K562 (cell line): ENCODE measurements at regions of chr1 and their contacts with region 1.

Region 1: GRCh38 chr1:12314333-12314903 is 84.6 kb downstream of the VPS13D start:
- DNase-seq: peak in 2 of 4 experiments; percentile 25 to 29
- ATAC-seq: peak; percentile 70
- H3K4me3 ChIP-seq: no peak overlapping the region
- H3K27ac ChIP-seq: no peak overlapping the region
- H3K4me1 ChIP-seq: 0 out of 5 replicates have a peak, but pooled peaks cover 0 to 2% of the 10 kb centered on the region in 2 experiments
- H3K27me3 ChIP-seq: no peaks in the 10 kb centered on the region
- CTCF ChIP-seq: peak; percentile 36 to 61 (median 54); a peak in 5 of 6 replicates
- EP300 ChIP-seq: no peak
- POLR2A ChIP-seq: no peak
- RAD21 ChIP-seq: peak; percentile 64 to 76

Region 2: DNA sequence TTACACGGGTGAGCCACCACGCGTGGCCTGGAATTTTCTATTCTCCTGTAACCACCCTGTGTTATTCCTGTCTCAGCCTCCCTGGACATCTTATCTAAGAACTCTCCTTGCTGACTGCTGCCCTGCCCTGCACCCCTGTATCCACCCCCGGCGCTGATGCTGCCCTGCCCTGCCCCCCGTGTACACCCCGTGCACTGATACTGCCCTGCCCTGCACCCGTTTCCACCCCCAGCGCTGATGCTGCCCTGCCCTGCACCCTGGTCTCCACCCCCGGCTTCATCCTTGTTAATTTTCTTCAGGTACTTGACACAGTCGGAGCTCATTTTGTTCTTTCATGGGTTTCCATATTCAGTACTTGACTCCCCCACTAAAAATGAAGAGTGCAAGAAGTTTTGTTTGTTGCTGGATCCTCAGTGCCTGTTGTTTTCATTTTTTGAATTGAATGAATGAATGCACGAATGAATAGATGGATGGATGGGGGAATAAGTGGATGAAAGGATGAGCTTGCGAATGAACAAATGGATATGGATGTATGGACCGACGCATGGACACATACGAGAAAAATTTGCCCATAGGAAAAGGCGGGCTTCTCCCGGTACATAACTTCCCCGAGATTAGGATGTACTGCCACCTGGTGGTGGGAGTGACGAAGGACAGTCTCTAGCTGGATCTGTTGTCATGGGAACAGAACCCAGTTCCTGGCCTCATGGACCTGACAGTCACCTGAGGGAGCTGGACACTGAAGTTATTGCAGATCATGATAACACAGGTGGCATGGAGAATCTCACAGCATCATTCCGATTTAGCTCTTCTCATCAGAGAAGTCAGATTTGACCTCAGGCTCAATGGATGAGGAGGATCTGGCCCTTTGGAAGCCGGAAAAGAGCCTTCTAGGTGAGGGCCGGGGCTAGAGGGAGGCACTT is 344.4 kb after region 1 on chr1:
- CTCF ChIA-PET with region 1: interaction called, 38 read pairs
- POLR2A ChIA-PET with region 1: interaction called, 3 read pairs
- in situ Hi-C with region 1: no loop called
- intact Hi-C with region 1: loop called (anchors 1 kb)
- DNase-seq: peak; percentile 94 to 98 (median 96)
- ATAC-seq: peak; percentile 74
- H3K4me3 ChIP-seq: no peak overlapping the region
- H3K27ac ChIP-seq: no peak overlapping the region
- H3K4me1 ChIP-seq: peaks cover 10 to 18% of the 10 kb centered on the region in 2 experiments
- H3K27me3 ChIP-seq: no peaks in the 10 kb centered on the region
- CTCF ChIP-seq: peak; percentile 90 to 98 (median 98)
- EP300 ChIP-seq: no peak
- POLR2A ChIP-seq: no peak
- RAD21 ChIP-seq: peak; percentile 90 to 97

Region 3: DNA sequence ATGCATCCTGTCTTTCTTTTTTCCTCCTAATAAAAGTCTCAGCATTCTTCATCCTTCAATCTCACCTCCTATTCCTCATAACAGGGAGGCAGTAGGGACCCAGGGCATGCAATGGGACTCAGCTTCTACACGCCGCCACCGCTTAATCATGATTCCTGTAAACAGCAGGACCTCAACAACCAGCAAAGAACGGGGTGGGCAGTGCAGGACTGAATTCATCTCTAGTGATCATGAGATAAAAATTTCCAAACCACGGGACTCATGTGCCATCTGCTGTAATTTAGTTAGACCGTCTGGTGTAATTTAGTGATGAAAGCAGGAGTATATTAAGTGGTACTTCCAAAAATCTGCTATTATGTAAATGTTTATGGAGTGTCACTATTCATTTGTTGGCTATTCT is 464.5 kb after region 1 on chr1:
- CTCF ChIA-PET with region 1: interaction called, 3 read pairs
- POLR2A ChIA-PET with region 1: no interaction called
- in situ Hi-C with region 1: loop called (anchors 10 kb)
- intact Hi-C with region 1: loop called (anchors 10 kb)
- DNase-seq: no peak
- ATAC-seq: no peak
- H3K4me3 ChIP-seq: no peak overlapping the region
- H3K27ac ChIP-seq: no peak overlapping the region
- H3K4me1 ChIP-seq: no peaks in the 10 kb centered on the region
- H3K27me3 ChIP-seq: peaks cover 15 to 42% of the 10 kb centered on the region in 2 experiments; a peak in 4 of 5 replicates
- CTCF ChIP-seq: peak in 1 of 3 experiments; percentile 12; a peak in 1 of 6 replicates
- EP300 ChIP-seq: no peak
- POLR2A ChIP-seq: no peak
- RAD21 ChIP-seq: peak; percentile 6 to 18; a peak in 1 of 4 replicates